AG04449 (cell line): ENCODE measurements at regions of chr13 and their contacts with region 1.

Region 1: GRCh38 chr13:51452361-51453206 is at the start of gene INTS6:
- DNase-seq: peak; percentile 97
- H3K4me3 ChIP-seq: peak within 1 kb of the TSS; percentile 78
- CTCF ChIP-seq: no peak

Region 2: DNA sequence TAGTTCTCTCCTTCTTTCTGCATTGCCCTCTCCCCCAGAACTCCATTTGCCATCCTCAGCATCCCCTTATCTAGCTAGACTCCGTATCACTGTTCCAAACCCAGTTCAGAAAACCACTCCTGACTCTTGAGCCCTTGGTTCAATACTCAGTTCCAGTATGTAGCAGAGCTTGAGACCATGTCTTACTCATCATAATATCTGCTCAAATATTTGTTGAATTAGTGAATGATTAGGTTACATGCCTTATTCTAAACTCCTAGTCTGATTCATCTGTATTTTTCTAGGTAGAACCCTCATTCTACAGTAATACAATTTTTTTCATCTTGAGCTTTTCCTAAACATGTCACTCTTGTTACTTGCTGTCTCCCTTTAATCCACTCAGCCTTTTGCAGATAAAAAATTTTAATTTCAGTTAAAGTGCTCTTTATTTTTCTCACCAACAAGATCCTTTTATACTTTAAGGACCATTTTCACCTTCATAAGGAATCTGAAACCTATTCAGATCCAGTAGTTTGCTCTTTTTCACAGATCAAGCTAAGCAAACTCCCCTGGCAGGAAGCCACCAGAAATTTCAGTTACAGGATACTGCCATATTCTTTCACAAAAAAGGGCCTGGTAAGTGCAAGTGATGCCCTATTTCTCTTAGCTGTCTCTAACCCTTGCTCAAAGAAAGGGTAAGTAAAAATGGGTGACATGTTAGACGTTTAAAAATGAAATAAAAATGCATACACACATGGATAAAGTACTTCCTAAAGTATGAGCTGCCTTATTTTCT is 23.3 kb after region 1 on chr13:
- CTCF ChIA-PET with region 1: interaction called, 5 read pairs
- POLR2A ChIA-PET with region 1: interaction called, 12 read pairs
- DNase-seq: no peak
- H3K4me3 ChIP-seq: no peak overlapping the region
- CTCF ChIP-seq: no peak

Region 3: GRCh38 chr13:51525567-51526167 is 73.1 kb after region 1 on chr13:
- CTCF ChIA-PET with region 1: no interaction called
- POLR2A ChIA-PET with region 1: interaction called, 13 read pairs
- DNase-seq: no peak
- H3K4me3 ChIP-seq: no peak overlapping the region
- CTCF ChIP-seq: no peak

Region 4: GRCh38 chr13:51590971-51591627 is 138.5 kb after region 1 on chr13:
- CTCF ChIA-PET with region 1: no interaction called
- POLR2A ChIA-PET with region 1: interaction called, 46 read pairs
- DNase-seq: peak; percentile 94
- H3K4me3 ChIP-seq: no peak overlapping the region
- CTCF ChIP-seq: no peak

Region 5: GRCh38 chr13:51645154-51645650 is 192.6 kb after region 1 on chr13:
- CTCF ChIA-PET with region 1: no interaction called
- POLR2A ChIA-PET with region 1: interaction called, 14 read pairs
- DNase-seq: no peak
- H3K4me3 ChIP-seq: no peak overlapping the region
- CTCF ChIP-seq: no peak

Region 6: GRCh38 chr13:51797664-51798488 is 345.3 kb after region 1 on chr13:
- CTCF ChIA-PET with region 1: interaction called, 11 read pairs
- POLR2A ChIA-PET with region 1: interaction called, 13 read pairs
- DNase-seq: no peak
- H3K4me3 ChIP-seq: no peak overlapping the region
- CTCF ChIP-seq: peak; percentile 42

Region 7: DNA sequence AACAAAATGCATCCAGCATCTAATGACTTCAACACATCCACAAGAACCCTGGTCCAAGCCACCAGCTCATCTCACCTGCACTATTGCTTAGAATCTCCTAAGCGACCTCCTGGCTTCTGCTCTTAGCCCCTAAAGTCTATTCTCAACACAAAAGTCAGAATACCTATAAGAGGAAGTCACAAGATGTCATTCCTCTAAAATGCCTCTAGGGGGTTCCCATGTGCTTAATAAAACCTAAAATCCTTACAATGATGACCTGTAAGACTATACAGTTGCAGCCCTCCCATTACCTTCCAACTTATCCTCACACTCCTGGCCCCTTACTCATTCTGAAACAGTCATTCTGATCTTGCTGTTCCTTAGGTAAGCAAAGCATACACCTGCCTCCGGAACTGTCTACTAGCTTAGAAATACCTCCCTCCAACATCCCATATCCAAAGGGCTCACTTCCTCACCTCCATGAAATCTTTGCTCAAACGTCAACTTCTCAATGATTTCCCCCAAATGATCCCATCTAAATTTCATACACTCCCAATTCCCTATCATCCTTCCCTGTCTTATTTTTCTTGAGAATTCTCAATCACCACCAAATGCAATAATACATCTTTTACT is 548.6 kb after region 1 on chr13:
- CTCF ChIA-PET with region 1: no interaction called
- POLR2A ChIA-PET with region 1: no interaction called
- DNase-seq: no peak
- H3K4me3 ChIP-seq: no peak overlapping the region
- CTCF ChIP-seq: peak; percentile 39